Activated CD8-positive, alpha-beta T cell treated with anti-CD3 and anti-CD28 coated beads for 36 hours (primary cell): ENCODE measurements at regions of chr20 and their contacts with region 1.

Region 1: GRCh38 chr20:17885544-17885943 is 83.0 kb downstream of the SNX5 start:
- DNase-seq: no peak
- ATAC-seq: no peak
- H3K4me3 Mint-ChIP-seq: no peak overlapping the region
- H3K27ac Mint-ChIP-seq: no peak overlapping the region
- H3K4me1 Mint-ChIP-seq: no peaks in the 10 kb centered on the region
- H3K27me3 Mint-ChIP-seq: peaks cover 1% of the 10 kb centered on the region
- CTCF ChIP-seq: no peak

Region 2: GRCh38 chr20:17675525-17676377 is 209.8 kb before region 1 on chr20:
- CTCF ChIA-PET with region 1: no interaction called
- POLR2A ChIA-PET with region 1: no interaction called
- intact Hi-C with region 1: no loop called
- DNase-seq: no peak
- ATAC-seq: no peak
- H3K4me3 Mint-ChIP-seq: no peak overlapping the region
- H3K27ac Mint-ChIP-seq: no peak overlapping the region
- H3K4me1 Mint-ChIP-seq: peaks cover 31% of the 10 kb centered on the region
- H3K27me3 Mint-ChIP-seq: no peaks in the 10 kb centered on the region
- CTCF ChIP-seq: no peak

Region 3: DNA sequence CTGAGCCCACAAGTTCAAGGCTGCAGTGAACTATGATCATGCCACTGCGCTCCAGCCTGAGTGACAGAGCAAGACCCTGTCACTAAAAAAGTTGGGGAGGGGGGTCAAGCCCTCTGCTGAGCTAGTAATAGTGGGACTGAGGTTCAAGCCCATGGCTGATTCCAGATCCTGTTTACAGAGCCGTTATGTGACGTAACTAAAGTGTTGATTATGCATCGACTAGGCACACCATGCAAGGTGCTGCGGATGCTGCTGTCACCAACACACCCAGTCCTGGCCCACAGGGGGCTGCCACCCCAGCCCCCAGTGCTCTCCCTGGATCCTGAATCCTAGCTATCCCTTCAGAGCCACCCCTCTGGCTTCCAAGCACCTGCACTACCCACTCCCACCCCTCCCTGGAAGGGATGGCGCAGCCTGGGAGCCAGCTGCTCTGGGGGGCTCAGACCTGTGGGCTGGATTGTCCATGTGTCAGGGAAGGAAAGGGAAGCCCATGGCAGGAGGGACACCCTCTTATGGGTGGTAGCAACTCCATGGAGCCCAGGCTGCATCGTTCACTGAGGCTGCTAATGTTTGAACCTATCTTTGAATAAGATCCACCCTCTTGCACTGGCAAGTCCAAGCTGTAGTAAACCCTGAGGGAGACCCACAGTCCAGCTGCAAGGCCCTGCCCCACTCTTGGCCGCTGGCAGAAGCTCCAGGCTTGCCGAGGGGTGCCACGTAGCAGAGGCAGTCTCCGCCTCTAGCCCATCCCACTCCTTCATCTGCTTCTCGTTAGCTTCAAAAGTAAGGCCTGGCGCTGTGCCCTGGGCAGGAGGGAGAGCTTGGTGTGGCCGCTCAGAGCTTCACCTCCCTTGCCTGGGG is 11.9 kb before region 1 on chr20:
- CTCF ChIA-PET with region 1: no interaction called
- POLR2A ChIA-PET with region 1: no interaction called
- intact Hi-C with region 1: no loop called
- DNase-seq: peak; percentile 40
- ATAC-seq: peak; percentile 45
- H3K4me3 Mint-ChIP-seq: no peak overlapping the region
- H3K27ac Mint-ChIP-seq: no peak overlapping the region
- H3K4me1 Mint-ChIP-seq: peaks cover 19% of the 10 kb centered on the region
- H3K27me3 Mint-ChIP-seq: peaks cover 11% of the 10 kb centered on the region
- CTCF ChIP-seq: no peak

Region 4: GRCh38 chr20:17898548-17898994 is 13.0 kb after region 1 on chr20:
- CTCF ChIA-PET with region 1: interaction called, 13 read pairs
- POLR2A ChIA-PET with region 1: interaction called, 3 read pairs
- intact Hi-C with region 1: no loop called
- DNase-seq: peak; percentile 81
- ATAC-seq: peak; percentile 67
- H3K4me3 Mint-ChIP-seq: no peak overlapping the region
- H3K27ac Mint-ChIP-seq: no peak overlapping the region
- H3K4me1 Mint-ChIP-seq: peaks cover 19% of the 10 kb centered on the region
- H3K27me3 Mint-ChIP-seq: peaks cover 21% of the 10 kb centered on the region
- CTCF ChIP-seq: peak; percentile 95